ENCODE measurements at regions of chr5 and their contacts with region 1.

Region 1: DNA sequence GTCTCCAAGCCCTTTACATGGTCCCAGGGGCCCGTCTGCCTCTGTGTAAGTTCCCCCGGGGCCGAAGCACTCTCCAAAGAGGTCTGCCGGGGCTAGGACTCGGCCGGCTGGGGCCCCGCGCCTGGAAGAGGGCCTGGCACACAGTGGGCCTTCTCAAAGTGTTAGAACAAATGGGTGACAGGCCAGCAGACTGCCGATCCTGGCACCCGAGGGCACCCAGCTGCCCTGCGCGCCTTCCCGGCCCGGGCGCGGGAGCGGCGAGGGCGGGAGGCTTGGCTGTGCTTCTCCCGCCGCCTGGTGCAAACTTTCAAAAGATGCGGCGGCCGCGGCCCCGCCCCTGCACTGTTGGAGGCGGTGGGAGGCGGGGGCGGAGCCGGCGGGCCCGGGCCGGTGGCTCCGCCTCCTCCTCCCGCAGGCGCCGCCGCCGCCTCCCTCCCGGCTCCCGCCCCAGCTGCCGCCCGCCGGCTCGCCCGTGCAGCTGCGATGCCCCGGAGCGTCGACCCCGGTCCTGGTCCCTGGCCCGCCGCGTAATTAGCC is at the start of gene NEURL1B:
- DNase-seq: peak; percentile 84
- total RNA-seq, gene NEURL1B: 19.7 TPM

Region 2: GRCh38 chr5:172255444-172255843 is 385.4 kb before region 1 on chr5:
- intact Hi-C with region 1: no loop called
- DNase-seq: no peak

Region 3: GRCh38 chr5:172479044-172479783 is 161.7 kb before region 1 on chr5:
- intact Hi-C with region 1: loop called (anchors 2 kb)
- DNase-seq: peak; percentile 86

Region 4: DNA sequence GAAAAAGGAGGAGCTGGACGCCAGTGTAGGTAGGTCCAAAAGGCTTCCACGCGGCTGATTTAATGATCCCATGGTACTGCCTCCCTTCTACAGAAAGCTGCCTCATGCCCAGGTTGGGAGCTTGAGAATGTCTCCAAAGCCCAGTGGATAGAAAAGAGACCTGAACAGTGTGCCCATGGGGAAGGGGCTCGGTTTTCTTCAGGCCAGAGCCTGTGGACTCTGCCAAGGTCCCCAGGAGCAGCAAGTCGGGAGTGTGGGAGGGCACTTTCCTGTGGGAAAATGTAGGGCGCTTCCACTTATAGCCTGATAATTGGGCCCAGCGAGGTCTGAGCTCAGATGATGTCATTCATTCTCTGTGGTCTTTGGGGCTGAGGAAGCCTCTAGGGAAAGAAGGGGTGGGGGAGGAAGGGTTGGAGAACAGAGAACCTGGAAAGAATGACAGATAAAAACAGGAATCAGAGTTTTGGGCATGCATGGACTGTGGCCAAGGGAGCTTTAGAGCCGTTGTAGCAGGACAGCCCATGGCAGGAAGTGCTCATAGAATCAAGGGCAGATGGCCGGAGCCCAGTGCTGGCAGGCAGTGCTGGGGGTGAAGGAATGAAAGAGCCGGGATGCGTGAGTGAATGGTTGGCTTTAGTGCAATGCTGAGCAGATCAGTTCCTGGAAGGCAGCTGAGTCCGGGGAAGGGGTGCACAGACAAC is 144.1 kb before region 1 on chr5:
- intact Hi-C with region 1: loop called (anchors 5 kb)
- DNase-seq: peak; percentile 82

Region 5: GRCh38 chr5:172607213-172607793 is 33.6 kb before region 1 on chr5:
- intact Hi-C with region 1: loop called (anchors 5 kb)
- DNase-seq: peak; percentile 36

Region 6: DNA sequence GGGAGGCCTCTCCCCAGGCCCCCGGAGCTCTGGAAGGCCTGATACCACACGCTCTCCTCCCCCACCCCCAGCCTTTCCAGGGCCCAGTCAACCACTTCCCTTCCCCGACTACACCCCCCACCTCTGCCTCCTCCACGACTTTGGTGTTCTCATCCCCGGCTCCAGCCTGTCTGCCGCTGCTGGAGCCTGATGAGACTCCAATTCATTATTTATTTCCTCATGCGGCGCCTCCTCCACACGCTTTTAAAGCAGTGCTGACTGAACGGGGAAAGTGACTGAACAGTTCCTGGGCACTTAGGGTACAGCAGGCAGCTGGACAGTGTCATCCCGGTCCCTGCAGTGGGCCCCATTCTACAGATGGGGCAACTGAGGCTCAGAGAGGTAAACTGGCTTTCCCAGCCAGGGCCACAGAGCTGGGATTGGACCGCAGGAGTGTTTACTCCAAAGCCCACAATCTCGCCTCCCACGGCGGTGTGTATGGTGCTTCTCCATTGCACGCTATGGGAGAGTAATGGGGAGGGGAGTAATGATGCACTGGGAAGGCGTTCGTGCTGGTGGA is 302.5 kb after region 1 on chr5:
- intact Hi-C with region 1: no loop called
- DNase-seq: no peak

Measured in cardiac septum (tissue), 1 donor.